ENCODE measurements at regions of chr13 and their contacts with region 1.

Region 1: GRCh38 chr13:35953537-35954206 is 177.5 kb downstream of the DCLK1 start:
- DNase-seq: peak in 4 of 5 donors; percentile 76 to 84 (median 82)
- ATAC-seq: peak; percentile 87 to 95 (median 92)
- H3K4me3 ChIP-seq: peak overlapping the region in 4 of 12 donors; percentile 20 to 28 (median 22)
- H3K27ac ChIP-seq: peak overlapping the region in 6 of 12 donors; percentile 7 to 46 (median 24)
- H3K4me1 ChIP-seq: peaks cover 0 to 27% (median 4%) of the 10 kb centered on the region in 12 donors
- H3K27me3 ChIP-seq: no peaks in the 10 kb centered on the region
- CTCF ChIP-seq: peak in 11 of 12 donors; percentile 45 to 79 (median 69)
- POLR2A ChIP-seq: no peak

Region 2: GRCh38 chr13:35630551-35631275 is 323.0 kb before region 1 on chr13:
- intact Hi-C with region 1: loop called in 7 of 10 experiments (anchors 5 to 10 kb)
- DNase-seq: no peak
- ATAC-seq: peak in 3 of 4 donors; percentile 70 to 82 (median 79)
- H3K4me3 ChIP-seq: no peak overlapping the region
- H3K27ac ChIP-seq: no peak overlapping the region
- H3K4me1 ChIP-seq: no peaks in the 10 kb centered on the region
- H3K27me3 ChIP-seq: no peaks in the 10 kb centered on the region
- CTCF ChIP-seq: peak; percentile 44 to 77 (median 69)
- POLR2A ChIP-seq: no peak

Region 3: GRCh38 chr13:35729926-35730627 is 223.6 kb before region 1 on chr13:
- intact Hi-C with region 1: loop called in 5 of 10 experiments (anchors 5 to 10 kb)
- DNase-seq: peak; percentile 77 to 94 (median 86)
- ATAC-seq: peak; percentile 87 to 96 (median 92)
- H3K4me3 ChIP-seq: no peak overlapping the region
- H3K27ac ChIP-seq: peak overlapping the region in 11 of 12 donors; percentile 9 to 75 (median 49)
- H3K4me1 ChIP-seq: peaks cover 0 to 44% (median 19%) of the 10 kb centered on the region in 12 donors
- H3K27me3 ChIP-seq: no peaks in the 10 kb centered on the region
- CTCF ChIP-seq: no peak
- POLR2A ChIP-seq: no peak

Region 4: GRCh38 chr13:35818633-35819067 is 135.0 kb before region 1 on chr13:
- intact Hi-C with region 1: loop called in 8 of 10 experiments (anchors 2 to 10 kb)
- DNase-seq: no peak
- ATAC-seq: peak in 2 of 4 donors; percentile 9 to 29
- H3K4me3 ChIP-seq: no peak overlapping the region
- H3K27ac ChIP-seq: no peak overlapping the region
- H3K4me1 ChIP-seq: no peaks in the 10 kb centered on the region
- H3K27me3 ChIP-seq: no peaks in the 10 kb centered on the region
- CTCF ChIP-seq: peak; percentile 54 to 80 (median 74)
- POLR2A ChIP-seq: no peak

Region 5: DNA sequence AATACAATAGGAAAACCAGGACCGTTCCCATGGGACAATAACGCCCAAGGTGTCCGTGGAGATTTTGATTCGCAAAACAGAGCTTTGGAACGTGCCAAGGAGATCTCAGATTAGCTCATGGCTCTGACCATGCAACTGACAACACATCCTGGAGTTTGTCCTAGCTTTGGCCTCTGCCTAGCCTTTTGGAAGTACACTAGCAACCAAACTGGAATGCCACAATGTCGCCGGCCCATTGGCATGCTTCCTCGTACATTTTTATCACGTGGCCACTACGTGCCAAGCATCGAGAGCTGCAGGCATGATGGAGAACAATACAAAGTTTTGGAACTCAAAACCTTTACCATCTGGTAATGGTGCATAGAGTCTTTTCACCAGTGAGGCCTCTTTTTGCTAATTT is 79.0 kb before region 1 on chr13:
- intact Hi-C with region 1: loop called in 2 of 10 experiments (anchors 5 kb)
- DNase-seq: peak; percentile 41 to 76 (median 63)
- ATAC-seq: peak; percentile 78 to 93 (median 90)
- H3K4me3 ChIP-seq: no peak overlapping the region
- H3K27ac ChIP-seq: peak overlapping the region in 11 of 12 donors; percentile 32 to 78 (median 68)
- H3K4me1 ChIP-seq: peaks cover 0 to 22% (median 9%) of the 10 kb centered on the region in 12 donors
- H3K27me3 ChIP-seq: no peaks in the 10 kb centered on the region
- CTCF ChIP-seq: no peak
- POLR2A ChIP-seq: no peak

Region 6: DNA sequence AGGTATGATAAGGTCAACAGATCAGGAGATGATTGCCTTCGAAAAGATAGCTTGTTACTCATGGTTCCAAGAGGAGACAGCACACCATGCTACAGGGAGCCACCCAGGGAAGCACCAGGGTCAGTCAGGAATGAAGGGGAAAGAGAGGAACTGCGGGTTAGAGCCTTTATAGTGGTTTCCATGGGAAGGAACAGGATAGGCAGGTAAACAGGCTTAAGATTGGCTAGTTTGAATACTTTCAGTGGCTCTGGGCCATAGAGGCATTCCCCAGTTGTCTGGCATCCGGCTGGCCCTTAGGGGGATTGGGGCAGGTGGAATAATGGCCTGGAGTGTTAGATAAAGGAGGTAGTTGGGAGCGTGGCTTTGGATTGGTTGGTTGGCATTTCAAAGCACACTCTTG is 646.0 kb after region 1 on chr13:
- intact Hi-C with region 1: no loop called
- DNase-seq: no peak
- ATAC-seq: no peak
- H3K4me3 ChIP-seq: no peak overlapping the region
- H3K27ac ChIP-seq: no peak overlapping the region
- H3K4me1 ChIP-seq: no peaks in the 10 kb centered on the region
- H3K27me3 ChIP-seq: no peaks in the 10 kb centered on the region
- CTCF ChIP-seq: no peak
- POLR2A ChIP-seq: no peak

Measured in heart left ventricle (tissue), 16 donors.